IMR-90 (cell line): ENCODE measurements at regions of chrX and their contacts with region 1.

Region 1: DNA sequence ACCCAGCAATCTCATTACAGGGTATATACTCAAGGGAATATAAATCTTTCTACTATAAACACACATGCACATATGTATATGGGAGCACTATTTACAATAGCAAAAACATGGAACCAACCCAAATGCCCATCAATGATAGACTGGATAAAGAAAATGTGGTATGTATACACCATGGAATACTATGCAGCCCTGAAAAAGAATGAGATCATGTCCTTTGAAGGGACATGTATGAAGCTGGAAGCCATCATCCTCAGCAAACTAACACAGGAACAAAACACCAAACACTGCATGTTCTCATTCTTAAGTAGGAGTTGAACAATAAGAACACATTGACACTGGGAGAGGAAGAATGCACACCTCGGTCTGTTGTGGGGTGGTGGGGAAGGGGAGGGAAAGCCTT is 80.6 kb upstream of the TBX22 start:
- DNase-seq: no peak
- ATAC-seq: no peak
- H3K4me3 ChIP-seq: no peak overlapping the region
- H3K27ac ChIP-seq: no peak overlapping the region
- H3K4me1 ChIP-seq: no peaks in the 10 kb centered on the region
- H3K27me3 ChIP-seq: no peaks in the 10 kb centered on the region
- CTCF ChIP-seq: no peak
- POLR2A ChIP-seq: no peak
- RAD21 ChIP-seq: no peak

Region 2: DNA sequence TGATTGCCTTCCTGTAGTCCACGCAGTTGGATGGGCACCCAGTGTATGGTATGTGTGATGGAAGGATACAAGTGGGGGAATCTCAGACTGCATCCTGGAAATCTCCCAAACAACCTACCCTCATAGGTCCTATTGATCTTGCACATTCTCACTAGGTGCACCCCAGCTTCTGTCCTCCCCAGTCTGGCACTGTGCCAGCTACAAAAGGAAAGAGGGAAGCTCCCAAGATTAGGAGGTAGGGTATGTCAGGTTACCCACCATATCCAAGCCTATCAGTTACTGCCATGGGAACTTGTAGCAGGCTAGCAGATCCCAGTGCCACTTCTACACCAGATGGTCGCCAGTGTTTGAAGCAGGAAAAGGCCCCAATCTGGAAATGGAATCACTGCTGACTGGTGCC is 92.2 kb after region 1 on chrX:
- CTCF ChIA-PET with region 1: no interaction called
- POLR2A ChIA-PET with region 1: no interaction called
- dilution Hi-C with region 1: no loop called
- in situ Hi-C with region 1: loop called (anchors 25 kb)
- intact Hi-C with region 1: no loop called
- DNase-seq: no peak
- ATAC-seq: no peak
- H3K4me3 ChIP-seq: no peak overlapping the region
- H3K27ac ChIP-seq: no peak overlapping the region
- H3K4me1 ChIP-seq: no peaks in the 10 kb centered on the region
- H3K27me3 ChIP-seq: no peaks in the 10 kb centered on the region; the same call in 1 of the 2 replicates
- CTCF ChIP-seq: no peak
- POLR2A ChIP-seq: no peak
- RAD21 ChIP-seq: no peak